ENCODE measurements at regions of chr17 and their contacts with region 1.

Region 1: GRCh38 chr17:80876950-80877728 is 114.5 kb upstream of the CHMP6 start:
- DNase-seq: peak; percentile 67
- H3K4me3 Mint-ChIP-seq: peak overlapping the region; percentile 67
- H3K27ac Mint-ChIP-seq: peak overlapping the region; percentile 88
- H3K4me1 Mint-ChIP-seq: peaks cover 54% of the 10 kb centered on the region
- H3K27me3 Mint-ChIP-seq: no peaks in the 10 kb centered on the region

Region 2: GRCh38 chr17:80649678-80650672 is 227.2 kb before region 1 on chr17:
- intact Hi-C with region 1: loop called (anchors 5 kb)
- DNase-seq: peak; percentile 53
- H3K4me3 Mint-ChIP-seq: peak overlapping the region; percentile 10
- H3K27ac Mint-ChIP-seq: peak overlapping the region; percentile 88
- H3K4me1 Mint-ChIP-seq: peaks cover 62% of the 10 kb centered on the region
- H3K27me3 Mint-ChIP-seq: no peaks in the 10 kb centered on the region

Region 3: DNA sequence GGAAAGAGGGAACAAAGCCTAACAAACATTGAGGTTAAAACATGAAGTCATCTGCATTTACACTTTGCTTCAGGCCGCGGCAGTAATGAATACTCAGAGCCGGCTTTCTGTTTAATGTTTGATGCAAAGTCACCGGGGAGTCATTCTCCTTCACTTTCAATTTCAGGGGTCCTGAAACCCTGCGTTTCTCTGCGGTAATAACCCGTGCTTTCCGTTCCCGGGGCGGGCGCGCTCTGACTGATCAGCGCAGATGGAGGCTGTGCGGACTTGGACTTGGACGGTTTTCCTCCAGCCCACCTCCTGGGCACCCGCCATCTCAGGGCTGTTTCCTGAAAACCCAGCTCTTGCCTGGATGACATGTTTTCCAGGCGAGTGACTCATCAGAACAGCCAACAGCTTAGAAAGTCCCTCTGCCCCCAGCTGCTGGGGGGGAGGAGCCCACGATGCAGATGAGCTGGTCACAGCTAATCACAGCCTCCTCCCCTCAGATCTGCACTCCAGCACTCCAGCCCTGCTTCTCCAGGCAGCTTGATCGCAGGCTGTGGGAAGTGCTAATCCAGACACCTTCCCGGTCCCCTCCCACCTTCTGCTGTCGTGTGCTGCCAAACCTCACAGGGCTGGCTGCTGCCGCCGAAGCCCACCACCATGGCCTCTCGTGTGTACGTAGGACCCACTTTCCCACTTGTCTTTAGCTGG is 44.1 kb before region 1 on chr17:
- intact Hi-C with region 1: loop called (anchors 1 kb)
- DNase-seq: peak; percentile 83
- H3K4me3 Mint-ChIP-seq: peak overlapping the region; percentile 77
- H3K27ac Mint-ChIP-seq: peak overlapping the region; percentile 94
- H3K4me1 Mint-ChIP-seq: peaks cover 47% of the 10 kb centered on the region
- H3K27me3 Mint-ChIP-seq: no peaks in the 10 kb centered on the region

Region 4: GRCh38 chr17:80855948-80856862 is 20.9 kb before region 1 on chr17:
- intact Hi-C with region 1: loop called (anchors 1 kb)
- DNase-seq: peak; percentile 88
- H3K4me3 Mint-ChIP-seq: peak overlapping the region; percentile 37
- H3K27ac Mint-ChIP-seq: peak overlapping the region; percentile 97
- H3K4me1 Mint-ChIP-seq: peaks cover 69% of the 10 kb centered on the region
- H3K27me3 Mint-ChIP-seq: no peaks in the 10 kb centered on the region

Region 5: DNA sequence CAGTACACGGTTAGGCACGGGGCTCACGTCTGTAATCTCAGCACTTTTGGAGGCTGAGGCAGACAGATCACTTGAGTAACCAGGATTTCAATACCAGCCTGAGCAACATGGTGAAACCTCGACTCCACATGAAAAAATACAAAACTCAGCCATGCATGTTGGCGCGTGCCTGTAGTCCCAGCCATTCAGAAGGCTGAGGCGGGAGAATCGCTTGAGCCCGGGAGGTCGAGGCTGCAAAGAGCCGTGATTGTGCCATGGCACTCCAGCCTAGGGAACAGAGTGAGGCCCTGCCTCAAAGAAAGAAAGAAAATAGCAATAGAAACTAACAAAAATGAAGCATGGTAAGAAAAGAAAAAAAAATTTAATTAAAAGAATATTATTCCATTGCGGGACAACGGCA is 13.5 kb before region 1 on chr17:
- intact Hi-C with region 1: loop called (anchors 1 kb)
- DNase-seq: no peak
- H3K4me3 Mint-ChIP-seq: no peak overlapping the region
- H3K27ac Mint-ChIP-seq: peak overlapping the region; percentile 58
- H3K4me1 Mint-ChIP-seq: peaks cover 69% of the 10 kb centered on the region
- H3K27me3 Mint-ChIP-seq: no peaks in the 10 kb centered on the region

Region 6: GRCh38 chr17:80938556-80938955 is 61.4 kb after region 1 on chr17:
- intact Hi-C with region 1: loop called (anchors 5 kb)
- DNase-seq: peak; percentile 69
- H3K4me3 Mint-ChIP-seq: peak overlapping the region; percentile 38
- H3K27ac Mint-ChIP-seq: peak overlapping the region; percentile 79
- H3K4me1 Mint-ChIP-seq: peaks cover 42% of the 10 kb centered on the region
- H3K27me3 Mint-ChIP-seq: no peaks in the 10 kb centered on the region

Measured in activated T-helper 2 cell treated with anti-CD3 and anti-CD28 coated beads, Interferon-gamma antibody, Interleukin-2, Interleukin-4, amounts not matched to agents 10 μg/mL and 5 μg/mL and 100 μg/mL, durations not matched to agents 14 hours and 24 hours and 36 hours (primary cell).